MCF 10A (cell line): ENCODE measurements at regions of chr15 and their contacts with region 1.

Region 1: GRCh38 chr15:59917504-59918157 is 86.5 kb upstream of the FOXB1 start:
- DNase-seq: peak; percentile 81
- H3K4me3 Mint-ChIP-seq: no peak overlapping the region
- H3K27ac Mint-ChIP-seq: no peak overlapping the region
- H3K4me1 Mint-ChIP-seq: peaks cover 20% of the 10 kb centered on the region
- H3K27me3 Mint-ChIP-seq: peaks cover 11% of the 10 kb centered on the region
- CTCF ChIP-seq: peak; percentile 77

Region 2: GRCh38 chr15:59725172-59725486 is 192.5 kb before region 1 on chr15:
- CTCF ChIA-PET with region 1: interaction called, 18 read pairs
- POLR2A ChIA-PET with region 1: no interaction called
- intact Hi-C with region 1: no loop called
- DNase-seq: no peak
- H3K4me3 Mint-ChIP-seq: no peak overlapping the region
- H3K27ac Mint-ChIP-seq: no peak overlapping the region
- H3K4me1 Mint-ChIP-seq: no peaks in the 10 kb centered on the region
- H3K27me3 Mint-ChIP-seq: peaks cover 13% of the 10 kb centered on the region
- CTCF ChIP-seq: no peak

Region 3: DNA sequence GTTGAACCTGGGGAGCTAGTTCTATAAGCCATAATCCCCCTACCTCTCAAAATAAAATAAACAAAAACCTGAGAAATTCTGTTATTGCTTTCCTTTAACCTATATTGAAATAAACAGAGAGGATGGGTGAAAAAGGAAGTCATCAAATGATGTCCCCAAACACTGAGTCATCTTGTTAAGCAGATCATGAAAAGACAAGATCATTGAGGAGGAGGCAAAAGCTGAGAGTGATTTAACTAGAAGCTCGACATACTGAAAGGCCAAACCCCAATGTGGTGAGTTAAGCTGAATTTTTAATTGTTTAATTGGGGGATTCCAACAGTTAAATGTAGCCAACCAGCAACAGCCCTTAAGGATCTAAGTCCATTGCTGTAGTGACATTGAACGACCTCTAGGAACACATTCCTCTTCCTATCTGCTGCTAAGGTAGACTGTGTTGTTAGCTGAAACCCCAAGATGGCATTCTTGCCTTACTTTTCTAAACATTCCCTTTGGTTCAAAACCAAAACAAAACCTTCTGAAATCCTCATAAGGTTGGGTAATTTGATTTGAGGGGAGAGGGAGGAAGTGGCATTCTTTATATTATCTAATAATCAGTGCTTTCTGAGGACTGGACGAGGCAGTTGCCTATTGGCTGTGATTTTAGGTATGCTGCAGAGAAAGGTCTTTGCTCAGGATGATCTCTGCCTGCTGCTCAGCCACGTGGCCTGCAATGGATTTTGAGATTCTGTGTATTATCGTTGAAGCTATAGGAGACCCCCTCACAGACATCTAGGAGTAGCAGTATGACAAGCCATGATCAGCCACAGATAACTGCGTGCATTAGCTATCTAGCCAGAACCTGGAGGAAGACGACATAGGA is 165.8 kb before region 1 on chr15:
- CTCF ChIA-PET with region 1: interaction called, 28 read pairs
- POLR2A ChIA-PET with region 1: interaction called, 4 read pairs
- intact Hi-C with region 1: loop called (anchors 2 kb)
- DNase-seq: peak; percentile 54
- H3K4me3 Mint-ChIP-seq: no peak overlapping the region
- H3K27ac Mint-ChIP-seq: no peak overlapping the region
- H3K4me1 Mint-ChIP-seq: no peaks in the 10 kb centered on the region
- H3K27me3 Mint-ChIP-seq: peaks cover 13% of the 10 kb centered on the region
- CTCF ChIP-seq: peak; percentile 73

Region 4: DNA sequence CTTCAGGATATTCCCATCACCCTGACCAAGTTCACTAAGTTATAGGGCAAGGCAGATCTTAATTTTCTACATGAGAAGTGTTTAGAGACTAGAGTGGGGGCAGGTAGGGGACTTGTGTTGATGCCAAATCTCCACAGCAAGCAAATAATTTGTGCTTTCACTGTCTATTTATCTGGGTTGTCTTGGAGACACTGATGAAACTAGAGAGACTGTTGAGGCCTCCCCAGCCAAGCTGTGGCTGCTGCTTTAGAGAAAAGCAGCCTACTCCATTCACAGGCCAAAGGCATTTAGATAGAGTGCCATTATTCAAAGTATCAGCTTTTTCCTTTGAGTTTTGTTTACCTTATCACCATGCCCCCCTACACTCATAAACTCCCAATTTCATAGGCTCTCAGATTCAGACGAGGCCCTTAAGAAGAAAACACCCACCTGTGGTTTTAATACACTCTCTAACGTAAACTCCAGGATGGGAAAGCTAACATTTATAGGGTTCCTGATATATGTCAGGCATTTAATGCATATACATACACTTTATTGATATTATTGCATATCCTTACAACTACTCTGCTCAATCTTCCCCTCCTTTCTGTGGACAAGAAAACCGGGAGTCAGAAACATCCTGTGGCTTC is 43.9 kb before region 1 on chr15:
- CTCF ChIA-PET with region 1: no interaction called
- POLR2A ChIA-PET with region 1: no interaction called
- intact Hi-C with region 1: no loop called
- DNase-seq: no peak
- H3K4me3 Mint-ChIP-seq: no peak overlapping the region
- H3K27ac Mint-ChIP-seq: no peak overlapping the region
- H3K4me1 Mint-ChIP-seq: peaks cover 5% of the 10 kb centered on the region
- H3K27me3 Mint-ChIP-seq: peaks cover 11% of the 10 kb centered on the region
- CTCF ChIP-seq: no peak

Region 5: DNA sequence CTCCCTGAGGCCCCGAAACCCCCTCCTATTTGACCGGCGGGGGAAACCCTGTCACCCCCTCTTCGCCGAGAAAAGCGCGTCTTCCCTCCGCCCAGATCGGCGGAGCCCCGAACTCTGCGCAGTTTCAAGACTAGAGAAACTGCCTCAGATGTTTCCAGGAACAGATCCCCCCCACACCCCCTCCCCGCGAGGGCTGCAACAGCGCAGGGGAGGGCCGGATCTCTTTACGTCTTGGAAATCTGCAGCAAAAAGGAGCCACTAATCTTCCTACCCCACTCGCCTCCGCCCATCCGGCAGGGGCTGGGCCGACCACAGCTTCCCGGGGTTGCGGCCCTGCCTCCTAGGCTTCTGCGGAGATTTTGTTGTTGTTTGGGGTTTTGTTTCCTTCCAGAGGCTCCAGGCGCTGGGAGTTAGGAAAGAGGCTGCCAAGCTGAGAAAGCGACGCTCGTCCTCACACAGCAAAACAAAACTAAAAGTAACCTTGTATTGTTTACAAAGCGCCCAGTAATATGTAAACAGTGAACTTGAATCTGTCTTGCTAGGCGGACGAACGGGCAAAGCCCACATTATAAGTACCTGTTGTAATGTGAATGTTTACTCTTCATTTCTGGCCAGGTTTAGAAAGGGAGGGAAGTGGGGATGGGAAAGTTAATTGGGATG is 88.7 kb after region 1 on chr15:
- CTCF ChIA-PET with region 1: no interaction called
- POLR2A ChIA-PET with region 1: no interaction called
- intact Hi-C with region 1: loop called (anchors 5 kb)
- DNase-seq: peak; percentile 78
- H3K4me3 Mint-ChIP-seq: peak overlapping the region; percentile 93
- H3K27ac Mint-ChIP-seq: peak overlapping the region; percentile 96
- H3K4me1 Mint-ChIP-seq: peaks cover 19% of the 10 kb centered on the region
- H3K27me3 Mint-ChIP-seq: peaks cover 40% of the 10 kb centered on the region
- CTCF ChIP-seq: no peak

Region 6: GRCh38 chr15:60091165-60091564 is 173.5 kb after region 1 on chr15:
- CTCF ChIA-PET with region 1: interaction called, 40 read pairs
- POLR2A ChIA-PET with region 1: interaction called, 5 read pairs
- intact Hi-C with region 1: no loop called
- DNase-seq: peak; percentile 98
- H3K4me3 Mint-ChIP-seq: no peak overlapping the region
- H3K27ac Mint-ChIP-seq: peak overlapping the region; percentile 81
- H3K4me1 Mint-ChIP-seq: peaks cover 43% of the 10 kb centered on the region
- H3K27me3 Mint-ChIP-seq: no peaks in the 10 kb centered on the region
- CTCF ChIP-seq: no peak

Region 7: DNA sequence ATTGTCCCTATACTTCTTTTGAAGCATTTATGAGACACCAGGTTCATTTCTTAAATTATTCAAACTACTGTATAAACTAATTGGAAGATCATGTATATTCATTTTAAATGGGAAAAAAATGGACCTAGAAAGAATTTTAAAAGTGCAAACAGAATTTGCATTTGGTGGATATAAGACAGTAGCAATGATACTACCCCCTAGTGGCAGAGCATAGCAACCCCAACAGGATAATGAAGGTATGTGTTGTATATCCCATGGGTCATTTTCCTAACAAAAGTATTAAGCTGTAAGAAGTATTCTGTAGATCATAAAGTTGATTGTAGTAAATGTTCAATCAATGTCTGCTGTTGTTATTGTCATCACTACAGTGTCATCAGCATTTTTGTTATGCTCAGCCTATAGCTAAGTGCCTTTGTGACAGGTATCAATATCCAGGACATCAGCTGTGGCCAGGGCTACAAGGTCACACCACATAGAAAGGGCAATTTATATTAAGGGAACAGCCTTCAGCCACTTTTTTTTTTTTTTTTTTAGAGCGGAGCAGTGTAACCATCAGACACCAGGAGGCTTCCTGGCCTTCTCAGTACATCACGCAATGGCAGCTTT is 262.3 kb after region 1 on chr15:
- CTCF ChIA-PET with region 1: interaction called, 72 read pairs
- POLR2A ChIA-PET with region 1: interaction called, 4 read pairs
- intact Hi-C with region 1: loop called (anchors 1 kb)
- DNase-seq: peak; percentile 58
- H3K4me3 Mint-ChIP-seq: no peak overlapping the region
- H3K27ac Mint-ChIP-seq: no peak overlapping the region
- H3K4me1 Mint-ChIP-seq: no peaks in the 10 kb centered on the region
- H3K27me3 Mint-ChIP-seq: no peaks in the 10 kb centered on the region
- CTCF ChIP-seq: peak; percentile 69